ENCODE measurements at regions of chr3 and their contacts with region 1.

Region 1: DNA sequence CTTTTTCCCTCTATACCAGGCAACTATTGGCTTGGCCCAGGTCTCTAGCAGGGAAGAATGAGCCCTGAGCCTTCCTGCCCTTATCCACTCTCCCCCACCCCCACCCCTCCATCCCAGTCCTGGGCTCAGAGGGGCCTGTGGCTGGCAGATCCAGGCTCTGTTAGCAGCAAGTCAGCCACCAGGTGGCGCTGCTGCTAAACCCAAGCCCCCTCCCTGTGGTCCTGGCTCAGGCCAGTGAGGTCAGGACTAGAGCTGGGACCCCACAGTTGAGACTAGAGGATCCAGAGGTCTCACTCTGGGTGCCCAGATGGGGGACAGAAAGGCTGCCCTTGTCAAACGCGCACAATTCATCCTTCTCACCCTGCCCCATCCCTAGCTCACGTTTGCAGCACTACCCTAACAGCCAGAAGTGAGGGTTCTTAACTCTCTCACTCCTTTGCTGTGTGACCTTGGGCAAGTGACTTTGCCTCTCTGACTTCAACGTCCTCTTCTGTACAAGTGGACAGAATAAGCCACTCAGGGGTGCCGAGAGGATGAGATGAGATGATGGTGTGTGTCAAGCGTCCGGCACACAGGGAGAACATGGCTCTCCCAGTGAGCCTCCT is 46.8 kb upstream of the SLC6A1 start:
- DNase-seq: peak; percentile 59
- ATAC-seq: peak; percentile 81
- H3K4me3 Mint-ChIP-seq: no peak overlapping the region
- H3K27ac Mint-ChIP-seq: no peak overlapping the region
- H3K4me1 Mint-ChIP-seq: no peaks in the 10 kb centered on the region
- H3K27me3 Mint-ChIP-seq: no peaks in the 10 kb centered on the region

Region 2: GRCh38 chr3:10974746-10975375 is 29.1 kb after region 1 on chr3:
- CTCF ChIA-PET with region 1: no interaction called
- DNase-seq: no peak
- ATAC-seq: no peak
- H3K4me3 Mint-ChIP-seq: no peak overlapping the region
- H3K27ac Mint-ChIP-seq: no peak overlapping the region
- H3K4me1 Mint-ChIP-seq: no peaks in the 10 kb centered on the region
- H3K27me3 Mint-ChIP-seq: peaks cover 5% of the 10 kb centered on the region

Region 3: DNA sequence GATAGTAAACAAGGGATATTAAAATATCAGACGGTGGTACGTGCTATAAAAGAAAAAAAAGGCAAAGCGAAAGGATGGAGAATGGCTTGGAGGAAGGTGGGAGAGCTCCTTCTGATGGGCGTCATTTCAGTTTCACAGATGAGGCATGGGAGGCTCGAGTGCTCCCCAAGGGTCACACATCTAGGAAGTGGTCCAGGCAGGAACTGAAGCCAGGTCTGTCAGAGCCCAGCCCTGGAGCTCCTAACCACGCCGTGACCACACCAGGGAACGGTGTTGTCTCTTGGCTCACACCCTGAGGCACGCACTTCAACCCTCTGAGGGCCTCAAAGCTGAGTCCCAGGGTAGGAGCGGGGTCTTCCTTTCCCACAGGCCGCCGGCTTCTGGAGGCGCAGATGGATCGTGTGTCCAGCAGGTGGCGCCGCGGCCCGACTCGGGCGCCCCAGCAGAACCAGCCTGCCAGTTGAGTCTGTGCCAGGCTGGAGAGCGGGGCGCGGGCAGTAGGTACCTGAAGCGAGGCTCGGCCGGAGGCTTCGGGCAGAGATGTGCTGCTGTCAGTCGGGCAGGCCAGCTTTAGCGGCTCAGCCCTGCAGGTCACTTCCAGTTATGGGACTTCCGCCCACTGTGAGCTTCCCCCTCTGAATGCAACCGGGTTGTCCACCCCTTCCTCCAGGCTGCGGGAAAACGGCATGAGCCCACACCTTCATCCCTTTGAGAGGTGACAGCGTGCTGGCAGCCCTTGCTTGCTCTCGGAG is 114.9 kb after region 1 on chr3:
- CTCF ChIA-PET with region 1: interaction called, 22 read pairs
- DNase-seq: peak; percentile 46
- ATAC-seq: peak; percentile 77
- H3K4me3 Mint-ChIP-seq: no peak overlapping the region
- H3K27ac Mint-ChIP-seq: no peak overlapping the region
- H3K4me1 Mint-ChIP-seq: peaks cover 2% of the 10 kb centered on the region
- H3K27me3 Mint-ChIP-seq: peaks cover 7% of the 10 kb centered on the region

Measured in activated CD8-positive, alpha-beta memory T cell treated with anti-CD3 and anti-CD28 coated beads, Interleukin-2, amount 10 ng/mL, durations not matched to agents 7 days and 5 days (primary cell).